ENCODE measurements at regions of chr12 and their contacts with region 1.

Region 1: DNA sequence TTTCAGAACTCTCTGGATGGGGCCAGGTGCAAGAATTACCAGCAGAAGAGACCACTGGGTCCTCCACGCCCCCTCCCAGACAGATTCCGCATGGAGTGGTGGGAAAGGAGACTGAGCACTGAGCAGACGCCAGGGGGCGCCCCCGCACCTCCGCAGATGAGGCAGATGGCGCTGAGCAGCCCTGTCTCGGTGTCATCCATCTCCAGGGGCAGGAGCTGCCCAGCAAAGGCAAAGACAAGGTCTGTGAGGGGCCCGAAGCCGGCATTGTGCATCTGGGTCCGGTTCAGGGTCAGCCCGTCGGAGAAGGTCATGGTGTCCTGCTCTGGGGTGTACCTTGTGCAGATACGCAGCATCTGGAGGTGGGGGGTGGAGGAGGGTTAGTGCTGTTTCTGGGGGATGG is 6.3 kb upstream of the ITGB7 start:
- DNase-seq: peak; percentile 59 to 92 (median 85)
- ATAC-seq: peak; percentile 74
- H3K4me3 ChIP-seq: no peak overlapping the region
- H3K4me3 Mint-ChIP-seq: no peak overlapping the region
- H3K27ac ChIP-seq: no peak overlapping the region
- H3K27ac Mint-ChIP-seq: peak overlapping the region; percentile 80
- H3K4me1 ChIP-seq: peaks cover 55% of the 10 kb centered on the region
- H3K4me1 Mint-ChIP-seq: peaks cover 62% of the 10 kb centered on the region
- H3K27me3 ChIP-seq: no peaks in the 10 kb centered on the region
- H3K27me3 Mint-ChIP-seq: no peaks in the 10 kb centered on the region
- CTCF ChIP-seq: peak; percentile 85

Region 2: GRCh38 chr12:53200458-53201176 is 12.7 kb before region 1 on chr12:
- CTCF ChIA-PET with region 1: interaction called, 33 read pairs
- POLR2A ChIA-PET with region 1: interaction called, 27 read pairs
- intact Hi-C with region 1: no loop called
- DNase-seq: peak in 3 of 9 experiments; percentile 31 to 63 (median 49)
- ATAC-seq: peak; percentile 41
- H3K4me3 ChIP-seq: peak overlapping the region in 1 of 2 experiments; percentile 7
- H3K4me3 Mint-ChIP-seq: peak overlapping the region; percentile 73
- H3K27ac ChIP-seq: peak overlapping the region; percentile 14 to 30
- H3K27ac Mint-ChIP-seq: peak overlapping the region; percentile 93
- H3K4me1 ChIP-seq: peaks cover 89% of the 10 kb centered on the region
- H3K4me1 Mint-ChIP-seq: peaks cover 72% of the 10 kb centered on the region
- H3K27me3 ChIP-seq: no peaks in the 10 kb centered on the region
- H3K27me3 Mint-ChIP-seq: no peaks in the 10 kb centered on the region
- CTCF ChIP-seq: no peak

Region 3: GRCh38 chr12:53241623-53242412 is 28.5 kb after region 1 on chr12:
- CTCF ChIA-PET with region 1: interaction called, 33 read pairs
- POLR2A ChIA-PET with region 1: interaction called, 9 read pairs
- intact Hi-C with region 1: no loop called
- DNase-seq: no peak
- ATAC-seq: no peak
- H3K4me3 ChIP-seq: no peak overlapping the region
- H3K4me3 Mint-ChIP-seq: no peak overlapping the region
- H3K27ac ChIP-seq: no peak overlapping the region
- H3K27ac Mint-ChIP-seq: no peak overlapping the region
- H3K4me1 ChIP-seq: peaks cover 8% of the 10 kb centered on the region
- H3K4me1 Mint-ChIP-seq: peaks cover 8% of the 10 kb centered on the region
- H3K27me3 ChIP-seq: peaks cover 0 to 2% of the 10 kb centered on the region in 2 experiments
- H3K27me3 Mint-ChIP-seq: peaks cover 3% of the 10 kb centered on the region
- CTCF ChIP-seq: no peak

Region 4: DNA sequence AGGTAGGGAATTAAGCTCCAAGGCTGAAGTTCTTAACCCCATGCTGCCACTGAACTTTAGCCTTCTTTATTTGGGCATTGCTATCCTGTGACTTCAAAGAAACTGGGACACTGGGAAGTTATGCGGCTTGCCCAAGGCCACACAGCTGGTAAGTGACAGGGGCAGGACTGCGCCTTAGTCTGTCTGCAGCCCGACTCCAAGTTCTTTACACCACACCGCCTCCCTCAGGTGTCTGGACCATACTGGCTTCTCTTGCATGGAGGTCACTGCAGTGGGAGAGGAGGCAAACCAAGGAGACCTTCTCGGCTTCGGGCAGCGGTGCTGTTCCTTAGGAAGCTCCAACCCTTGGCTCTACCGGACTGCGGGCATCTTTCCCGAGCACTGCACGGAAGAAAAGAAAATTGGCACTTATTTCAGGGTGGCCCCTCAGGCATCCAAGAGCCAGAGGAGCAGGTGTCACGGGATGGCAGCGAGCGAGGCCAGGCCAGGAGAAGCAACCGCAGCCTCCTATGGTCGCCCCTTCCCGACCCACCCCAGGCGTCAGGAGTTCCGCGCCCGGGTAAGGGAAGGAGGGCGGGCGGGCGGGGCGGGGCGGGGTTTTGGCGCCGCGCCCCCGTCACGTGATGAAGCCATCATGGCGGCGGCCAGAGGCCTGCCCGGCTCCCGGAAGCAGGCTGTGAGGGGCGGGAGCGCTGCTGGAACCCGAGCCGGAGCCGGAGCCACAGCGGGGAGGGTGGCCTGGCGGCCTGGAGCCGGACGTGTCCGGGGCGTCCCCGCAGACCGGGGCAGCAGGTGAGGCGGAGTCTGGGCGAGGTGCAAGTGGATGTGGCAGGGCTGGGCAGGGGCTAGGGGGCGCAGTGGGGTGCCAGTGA is 38.4 kb after region 1 on chr12:
- CTCF ChIA-PET with region 1: interaction called, 143 read pairs
- POLR2A ChIA-PET with region 1: interaction called, 13 read pairs
- intact Hi-C with region 1: loop called (anchors 1 kb)
- DNase-seq: peak; percentile 28 to 85 (median 71)
- ATAC-seq: peak; percentile 87
- H3K4me3 ChIP-seq: peak overlapping the region; percentile 71 to 86
- H3K4me3 Mint-ChIP-seq: peak overlapping the region; percentile 98
- H3K27ac ChIP-seq: peak overlapping the region; percentile 70 to 80
- H3K27ac Mint-ChIP-seq: peak overlapping the region; percentile 96
- H3K4me1 ChIP-seq: peaks cover 46% of the 10 kb centered on the region
- H3K4me1 Mint-ChIP-seq: peaks cover 50% of the 10 kb centered on the region
- H3K27me3 ChIP-seq: no peaks in the 10 kb centered on the region
- H3K27me3 Mint-ChIP-seq: no peaks in the 10 kb centered on the region
- CTCF ChIP-seq: peak; percentile 40

Region 5: DNA sequence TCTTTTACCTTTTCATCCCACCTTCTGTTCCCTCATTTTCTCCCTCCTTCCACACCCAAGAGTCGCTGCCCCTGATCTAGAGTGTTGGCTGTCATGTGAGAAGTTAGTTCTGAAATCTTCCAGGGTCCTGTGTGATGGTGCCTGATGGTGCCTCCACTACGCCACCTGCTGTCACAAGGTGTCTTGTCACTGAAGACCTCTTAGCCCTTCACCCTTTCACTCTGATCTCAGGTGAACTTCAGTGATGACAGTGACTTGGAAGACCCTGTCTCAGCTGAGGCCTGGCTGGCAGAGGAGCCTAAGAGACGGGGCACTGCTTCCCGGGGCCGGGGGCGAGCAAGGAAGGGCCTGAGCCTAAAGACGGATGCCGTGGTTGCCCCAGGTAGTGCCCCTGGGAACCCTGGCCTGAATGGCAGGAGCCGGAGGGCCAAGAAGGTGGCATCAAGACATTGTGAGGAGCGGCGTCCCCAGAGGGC is 74.4 kb after region 1 on chr12:
- CTCF ChIA-PET with region 1: interaction called, 353 read pairs
- POLR2A ChIA-PET with region 1: interaction called, 4 read pairs
- intact Hi-C with region 1: loop called (anchors 1 kb)
- DNase-seq: peak; percentile 42 to 86 (median 75)
- ATAC-seq: peak; percentile 96
- H3K4me3 ChIP-seq: no peak overlapping the region
- H3K4me3 Mint-ChIP-seq: no peak overlapping the region
- H3K27ac ChIP-seq: no peak overlapping the region
- H3K27ac Mint-ChIP-seq: no peak overlapping the region
- H3K4me1 ChIP-seq: no peaks in the 10 kb centered on the region
- H3K4me1 Mint-ChIP-seq: peaks cover 4% of the 10 kb centered on the region
- H3K27me3 ChIP-seq: no peaks in the 10 kb centered on the region
- H3K27me3 Mint-ChIP-seq: no peaks in the 10 kb centered on the region
- CTCF ChIP-seq: peak; percentile 62

Region 6: GRCh38 chr12:53344824-53345485 is 131.6 kb after region 1 on chr12:
- CTCF ChIA-PET with region 1: interaction called, 17 read pairs
- POLR2A ChIA-PET with region 1: no interaction called
- intact Hi-C with region 1: loop called (anchors 1 kb)
- DNase-seq: peak; percentile 44 to 85 (median 70)
- ATAC-seq: peak; percentile 85
- H3K4me3 ChIP-seq: peak overlapping the region; percentile 61 to 72
- H3K4me3 Mint-ChIP-seq: peak overlapping the region; percentile 93
- H3K27ac ChIP-seq: peak overlapping the region; percentile 27 to 47
- H3K27ac Mint-ChIP-seq: peak overlapping the region; percentile 77
- H3K4me1 ChIP-seq: peaks cover 16% of the 10 kb centered on the region
- H3K4me1 Mint-ChIP-seq: peaks cover 15% of the 10 kb centered on the region
- H3K27me3 ChIP-seq: no peaks in the 10 kb centered on the region
- H3K27me3 Mint-ChIP-seq: no peaks in the 10 kb centered on the region
- CTCF ChIP-seq: peak; percentile 58